Right ventricle myocardium inferior (tissue), 1 donor: ENCODE measurements at regions of chr6 and their contacts with region 1.

Region 1: GRCh38 chr6:17771609-17772008 is 64.9 kb upstream of the NUP153 start:
- DNase-seq: no peak
- ATAC-seq: no peak

Region 2: GRCh38 chr6:17610835-17611234 is 160.8 kb before region 1 on chr6:
- intact Hi-C with region 1: no loop called
- DNase-seq: no peak
- ATAC-seq: no peak

Region 3: GRCh38 chr6:17666646-17667045 is 105.0 kb before region 1 on chr6:
- intact Hi-C with region 1: loop called (anchors 10 kb)
- DNase-seq: no peak
- ATAC-seq: no peak